ENCODE measurements at regions of chr2 and their contacts with region 1.

Region 1: DNA sequence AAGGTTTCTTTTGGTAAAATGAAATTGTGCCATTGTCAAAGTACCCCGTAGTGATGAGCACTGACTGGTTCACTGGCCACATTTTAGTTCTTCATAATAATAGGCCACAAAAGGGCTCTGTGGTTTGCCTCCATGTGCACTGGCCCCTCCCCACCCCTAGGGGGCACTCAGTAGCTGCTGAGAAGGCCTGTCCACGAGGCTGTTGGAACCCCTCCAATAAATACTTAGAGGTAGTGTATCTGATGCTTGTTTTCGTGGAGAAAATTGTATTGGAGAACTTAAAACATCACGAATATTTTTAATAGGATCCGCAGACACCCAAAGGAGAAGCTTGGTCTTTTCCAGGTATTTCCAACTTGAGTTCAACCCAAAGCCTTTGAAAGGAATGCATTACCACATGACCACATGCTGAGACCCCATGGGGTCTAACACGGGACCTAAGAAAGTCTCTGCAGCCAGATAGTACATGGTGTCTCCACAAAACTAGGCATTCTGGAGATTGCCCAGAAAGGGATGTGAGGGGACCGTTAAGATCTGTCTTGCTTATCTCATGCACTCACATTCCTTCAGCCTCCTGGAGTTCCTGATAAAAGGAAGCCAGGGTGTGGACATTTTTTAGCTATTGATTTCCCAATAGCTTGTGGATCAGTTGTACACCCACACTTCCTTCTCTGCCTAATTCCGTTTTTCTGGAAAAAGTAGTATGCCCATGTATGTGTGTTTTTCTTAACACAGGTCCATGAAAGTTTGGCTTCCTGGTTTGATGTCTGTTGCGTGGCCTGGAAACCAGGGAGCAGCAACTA is 28.5 kb upstream of the NOSTRIN start:
- DNase-seq: peak; percentile 67
- ATAC-seq: peak; percentile 95
- H3K4me3 ChIP-seq: no peak overlapping the region
- H3K27ac ChIP-seq: no peak overlapping the region
- H3K4me1 ChIP-seq: no peaks in the 10 kb centered on the region
- H3K27me3 ChIP-seq: no peaks in the 10 kb centered on the region
- CTCF ChIP-seq: peak; percentile 81
- POLR2A ChIP-seq: no peak
- RAD21 ChIP-seq: peak; percentile 85

Region 2: GRCh38 chr2:168518555-168519066 is 255.3 kb before region 1 on chr2:
- CTCF ChIA-PET with region 1: no interaction called
- POLR2A ChIA-PET with region 1: no interaction called
- dilution Hi-C with region 1: no loop called
- in situ Hi-C with region 1: no loop called
- intact Hi-C with region 1: no loop called
- DNase-seq: peak; percentile 34
- ATAC-seq: peak; percentile 42; the same call in 1 of the 2 replicates
- H3K4me3 ChIP-seq: no peak overlapping the region
- H3K27ac ChIP-seq: no peak overlapping the region
- H3K4me1 ChIP-seq: peaks cover 13% of the 10 kb centered on the region
- H3K27me3 ChIP-seq: no peaks in the 10 kb centered on the region
- CTCF ChIP-seq: no peak
- POLR2A ChIP-seq: no peak
- RAD21 ChIP-seq: no peak

Region 3: GRCh38 chr2:168912901-168913369 is 139.0 kb after region 1 on chr2:
- CTCF ChIA-PET with region 1: interaction called, 3 read pairs
- POLR2A ChIA-PET with region 1: no interaction called
- dilution Hi-C with region 1: no loop called
- in situ Hi-C with region 1: loop called (anchors 5 kb)
- intact Hi-C with region 1: no loop called
- DNase-seq: peak; percentile 4
- ATAC-seq: peak; percentile 68
- H3K4me3 ChIP-seq: peak overlapping the region; percentile 15
- H3K27ac ChIP-seq: no peak overlapping the region
- H3K4me1 ChIP-seq: no peaks in the 10 kb centered on the region
- H3K27me3 ChIP-seq: peaks cover 16% of the 10 kb centered on the region
- CTCF ChIP-seq: no peak
- POLR2A ChIP-seq: no peak
- RAD21 ChIP-seq: no peak

Region 4: GRCh38 chr2:168920504-168921157 is 146.7 kb after region 1 on chr2:
- CTCF ChIA-PET with region 1: interaction called, 3 read pairs
- POLR2A ChIA-PET with region 1: no interaction called
- dilution Hi-C with region 1: no loop called
- in situ Hi-C with region 1: loop called (anchors 5 kb)
- intact Hi-C with region 1: loop called (anchors 1 kb)
- DNase-seq: peak; percentile 34
- ATAC-seq: peak; percentile 57; the same call in 1 of the 2 replicates
- H3K4me3 ChIP-seq: no peak overlapping the region
- H3K27ac ChIP-seq: no peak overlapping the region
- H3K4me1 ChIP-seq: no peaks in the 10 kb centered on the region
- H3K27me3 ChIP-seq: peaks cover 6% of the 10 kb centered on the region
- CTCF ChIP-seq: peak; percentile 67
- POLR2A ChIP-seq: no peak
- RAD21 ChIP-seq: peak; percentile 76

Region 5: DNA sequence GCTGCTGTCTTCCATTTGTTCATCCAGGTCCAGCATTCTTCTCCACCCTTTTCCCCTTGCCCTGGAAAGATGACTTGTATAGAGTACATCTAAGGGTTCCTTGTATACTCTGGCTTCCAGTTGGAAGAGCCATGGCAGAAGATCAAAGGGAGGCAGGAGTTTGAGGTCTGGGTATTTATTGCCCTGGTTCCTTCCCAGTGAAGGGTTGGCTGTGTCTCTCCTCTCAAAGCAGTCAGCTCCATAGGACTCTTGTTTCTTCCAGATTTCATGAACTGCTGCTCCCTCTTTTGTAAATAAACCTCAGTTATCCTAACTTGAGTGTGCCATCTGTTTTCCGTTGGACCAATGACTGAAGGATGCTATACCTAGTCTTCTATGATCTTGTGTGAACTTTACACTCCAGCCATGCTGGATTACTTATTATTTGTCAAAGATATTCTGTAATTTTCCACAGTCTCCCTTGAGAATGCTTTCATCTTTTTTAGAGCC is 711.8 kb after region 1 on chr2:
- CTCF ChIA-PET with region 1: no interaction called
- POLR2A ChIA-PET with region 1: no interaction called
- dilution Hi-C with region 1: no loop called
- in situ Hi-C with region 1: no loop called
- intact Hi-C with region 1: no loop called
- DNase-seq: no peak
- ATAC-seq: no peak
- H3K4me3 ChIP-seq: no peak overlapping the region
- H3K27ac ChIP-seq: no peak overlapping the region
- H3K4me1 ChIP-seq: no peaks in the 10 kb centered on the region
- H3K27me3 ChIP-seq: no peaks in the 10 kb centered on the region
- CTCF ChIP-seq: no peak
- POLR2A ChIP-seq: no peak
- RAD21 ChIP-seq: no peak

Measured in IMR-90 (cell line).